ENCODE measurements at regions of chr16 and their contacts with region 1.

Region 1: DNA sequence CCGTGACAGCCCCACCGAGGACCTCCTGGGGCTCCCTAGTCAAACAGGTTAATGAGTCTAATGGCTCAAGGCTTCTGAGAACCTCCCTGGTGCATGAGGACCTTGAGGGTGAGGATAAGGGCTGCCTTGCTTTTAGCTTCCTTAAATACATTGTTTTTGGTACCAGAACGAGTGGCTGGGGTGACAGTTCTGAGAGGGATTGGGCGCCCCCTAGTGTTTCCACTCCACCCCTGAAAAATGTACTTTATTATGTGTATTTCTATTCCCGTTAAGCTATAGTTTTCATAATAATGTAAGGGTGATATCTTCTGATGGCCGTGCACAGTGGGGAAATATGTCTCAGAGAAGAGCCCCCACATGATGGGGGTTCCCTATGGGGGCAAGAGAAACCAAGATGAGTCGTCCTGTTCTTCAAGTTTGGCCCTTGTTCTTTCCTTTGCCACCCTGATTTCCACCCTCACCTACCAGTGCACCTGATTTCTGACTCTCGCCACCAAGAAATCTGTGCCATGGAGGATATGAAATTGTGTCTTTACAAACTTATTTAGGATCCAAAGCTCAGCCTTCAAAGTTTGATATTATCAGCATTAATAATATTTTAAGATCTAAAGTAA is 14.5 kb upstream of the VWA3A start:
- DNase-seq: peak; percentile 72
- H3K4me3 ChIP-seq: no peak overlapping the region
- H3K27ac ChIP-seq: no peak overlapping the region
- H3K4me1 ChIP-seq: peaks cover 28% of the 10 kb centered on the region
- H3K27me3 ChIP-seq: no peaks in the 10 kb centered on the region
- CTCF ChIP-seq: peak; percentile 76 to 77
- POLR2A ChIP-seq: no peak

Region 2: GRCh38 chr16:21989133-21989532 is 88.7 kb before region 1 on chr16:
- CTCF ChIA-PET with region 1: interaction called, 130 read pairs
- POLR2A ChIA-PET with region 1: no interaction called
- dilution Hi-C with region 1: no loop called
- intact Hi-C with region 1: no loop called
- DNase-seq: no peak
- H3K4me3 ChIP-seq: no peak overlapping the region
- H3K27ac ChIP-seq: no peak overlapping the region
- H3K4me1 ChIP-seq: no peaks in the 10 kb centered on the region
- H3K27me3 ChIP-seq: no peaks in the 10 kb centered on the region
- CTCF ChIP-seq: no peak
- POLR2A ChIP-seq: no peak

Region 3: GRCh38 chr16:22023505-22023904 is 54.3 kb before region 1 on chr16:
- CTCF ChIA-PET with region 1: interaction called, 994 read pairs
- POLR2A ChIA-PET with region 1: no interaction called
- dilution Hi-C with region 1: no loop called
- intact Hi-C with region 1: loop called (anchors 1 kb)
- DNase-seq: no peak
- H3K4me3 ChIP-seq: no peak overlapping the region
- H3K27ac ChIP-seq: no peak overlapping the region
- H3K4me1 ChIP-seq: peaks cover 59% of the 10 kb centered on the region
- H3K27me3 ChIP-seq: no peaks in the 10 kb centered on the region
- CTCF ChIP-seq: no peak
- POLR2A ChIP-seq: no peak

Region 4: GRCh38 chr16:22063888-22064467 is 13.8 kb before region 1 on chr16:
- CTCF ChIA-PET with region 1: interaction called, 61 read pairs
- POLR2A ChIA-PET with region 1: no interaction called
- dilution Hi-C with region 1: no loop called
- intact Hi-C with region 1: no loop called
- DNase-seq: no peak
- H3K4me3 ChIP-seq: no peak overlapping the region
- H3K27ac ChIP-seq: no peak overlapping the region
- H3K4me1 ChIP-seq: no peaks in the 10 kb centered on the region
- H3K27me3 ChIP-seq: no peaks in the 10 kb centered on the region
- CTCF ChIP-seq: no peak
- POLR2A ChIP-seq: no peak

Region 5: DNA sequence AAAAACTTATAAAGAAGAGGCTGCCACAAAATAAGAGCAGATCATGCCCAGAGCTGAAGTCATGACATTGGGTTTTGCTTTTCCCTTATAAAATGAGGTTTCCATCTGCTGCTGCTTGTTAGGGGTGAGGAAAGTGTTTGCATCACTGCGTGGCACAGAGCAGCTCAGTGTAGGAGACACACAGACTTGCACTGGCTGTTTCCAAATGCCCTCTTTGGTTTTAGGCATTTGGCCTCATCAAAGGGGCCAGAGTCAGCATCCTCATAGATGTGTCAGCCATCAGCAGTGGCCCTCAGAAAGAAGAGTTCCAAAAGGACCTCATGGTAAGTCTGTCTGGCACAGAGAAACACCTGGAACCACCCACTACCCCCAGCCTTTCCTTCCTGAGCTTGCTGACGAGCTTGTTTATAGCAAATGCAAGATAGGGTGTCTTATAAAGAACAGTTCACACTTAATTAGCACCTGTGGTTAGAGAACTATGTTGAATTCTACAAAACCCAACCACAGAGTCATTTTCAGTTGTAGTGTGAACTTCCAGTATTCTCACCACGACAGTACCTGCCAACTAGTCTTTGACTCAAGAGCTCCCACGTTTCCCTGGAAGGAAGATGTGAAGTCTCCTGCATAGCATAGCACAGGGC is 31.6 kb after region 1 on chr16:
- CTCF ChIA-PET with region 1: interaction called, 14 read pairs
- POLR2A ChIA-PET with region 1: no interaction called
- dilution Hi-C with region 1: no loop called
- intact Hi-C with region 1: no loop called
- DNase-seq: no peak
- H3K4me3 ChIP-seq: no peak overlapping the region
- H3K27ac ChIP-seq: no peak overlapping the region
- H3K4me1 ChIP-seq: no peaks in the 10 kb centered on the region
- H3K27me3 ChIP-seq: peaks cover 13 to 22% of the 10 kb centered on the region in 2 experiments
- CTCF ChIP-seq: no peak
- POLR2A ChIP-seq: no peak

Measured in endothelial cell of umbilical vein (primary cell).